Activated T-helper 1 cell treated with anti-CD3 and anti-CD28 coated beads, Interleukin-12 subunit alpha, Interleukin-12 subunit beta, Interleukin-2, Interleukin-4 antibody, amounts not matched to agents 30 ng/mL and 10 ng/mL and 1 ng/mL, durations not matched to agents 14 hours and 24 hours and 36 hours (primary cell): ENCODE measurements at regions of chr18 and their contacts with region 1.

Region 1: GRCh38 chr18:23231340-23232021 is 96.2 kb downstream of the CABLES1 start:
- DNase-seq: peak; percentile 80
- H3K4me3 Mint-ChIP-seq: peak overlapping the region; percentile 72
- H3K27ac Mint-ChIP-seq: peak overlapping the region; percentile 89
- H3K4me1 Mint-ChIP-seq: peaks cover 64% of the 10 kb centered on the region
- H3K27me3 Mint-ChIP-seq: peaks cover 8% of the 10 kb centered on the region

Region 2: DNA sequence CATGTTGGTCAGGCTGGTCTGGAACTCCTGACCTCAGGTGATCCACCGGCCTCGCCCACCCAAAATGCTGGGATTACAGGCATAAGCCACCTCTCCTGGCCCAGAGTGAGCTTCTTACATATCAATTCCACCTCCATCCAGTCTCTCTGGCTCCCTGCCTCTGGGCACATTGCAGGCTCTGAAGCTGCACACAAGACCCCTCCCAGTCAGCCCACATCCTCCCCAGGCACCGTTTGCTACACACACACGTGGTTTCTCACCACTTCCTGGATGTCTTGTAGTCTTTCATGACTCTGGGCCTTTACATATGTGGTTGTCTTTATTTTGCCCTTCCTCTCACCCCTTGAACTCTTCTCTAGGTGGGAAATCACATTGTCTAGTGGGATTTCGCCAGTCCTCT is 160.2 kb before region 1 on chr18:
- intact Hi-C with region 1: loop called (anchors 5 kb)
- DNase-seq: peak; percentile 86
- H3K4me3 Mint-ChIP-seq: peak overlapping the region; percentile 63
- H3K27ac Mint-ChIP-seq: peak overlapping the region; percentile 97
- H3K4me1 Mint-ChIP-seq: peaks cover 60% of the 10 kb centered on the region
- H3K27me3 Mint-ChIP-seq: peaks cover 2% of the 10 kb centered on the region

Region 3: GRCh38 chr18:23283916-23284430 is 52.5 kb after region 1 on chr18:
- intact Hi-C with region 1: no loop called
- DNase-seq: no peak
- H3K4me3 Mint-ChIP-seq: no peak overlapping the region
- H3K27ac Mint-ChIP-seq: no peak overlapping the region
- H3K4me1 Mint-ChIP-seq: peaks cover 17% of the 10 kb centered on the region
- H3K27me3 Mint-ChIP-seq: no peaks in the 10 kb centered on the region

Region 4: GRCh38 chr18:23356915-23357601 is 125.6 kb after region 1 on chr18:
- intact Hi-C with region 1: loop called (anchors 1 kb)
- DNase-seq: no peak
- H3K4me3 Mint-ChIP-seq: no peak overlapping the region
- H3K27ac Mint-ChIP-seq: no peak overlapping the region
- H3K4me1 Mint-ChIP-seq: peaks cover 21% of the 10 kb centered on the region
- H3K27me3 Mint-ChIP-seq: no peaks in the 10 kb centered on the region

Region 5: GRCh38 chr18:23437357-23438045 is 206.0 kb after region 1 on chr18:
- intact Hi-C with region 1: loop called (anchors 1 kb)
- DNase-seq: peak; percentile 74
- H3K4me3 Mint-ChIP-seq: peak overlapping the region; percentile 86
- H3K27ac Mint-ChIP-seq: peak overlapping the region; percentile 44
- H3K4me1 Mint-ChIP-seq: peaks cover 22% of the 10 kb centered on the region
- H3K27me3 Mint-ChIP-seq: peaks cover 2% of the 10 kb centered on the region

Region 6: DNA sequence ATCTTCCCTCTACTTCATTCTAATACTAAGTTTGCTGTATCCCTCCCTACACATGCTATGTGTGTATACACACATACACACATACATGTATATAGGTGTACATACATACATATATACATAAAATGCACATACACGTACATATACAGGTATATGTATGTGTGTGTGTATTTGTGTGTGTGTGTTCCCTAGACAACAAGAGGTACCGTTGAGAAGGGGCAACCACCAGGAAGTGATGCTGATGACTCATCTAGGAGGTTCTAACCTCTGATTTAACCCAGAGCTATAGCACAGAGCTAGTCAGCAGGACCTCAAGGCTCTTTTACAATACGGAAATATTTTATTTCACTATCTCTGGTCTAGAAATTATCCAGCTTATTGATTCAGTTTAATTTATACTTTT is 596.9 kb after region 1 on chr18:
- intact Hi-C with region 1: loop called (anchors 10 kb)
- DNase-seq: peak; percentile 49
- H3K4me3 Mint-ChIP-seq: no peak overlapping the region
- H3K27ac Mint-ChIP-seq: peak overlapping the region; percentile 89
- H3K4me1 Mint-ChIP-seq: peaks cover 52% of the 10 kb centered on the region
- H3K27me3 Mint-ChIP-seq: peaks cover 4% of the 10 kb centered on the region

Region 7: GRCh38 chr18:23938043-23938756 is 706.7 kb after region 1 on chr18:
- intact Hi-C with region 1: no loop called
- DNase-seq: peak; percentile 8
- H3K4me3 Mint-ChIP-seq: peak overlapping the region; percentile 17
- H3K27ac Mint-ChIP-seq: peak overlapping the region; percentile 61
- H3K4me1 Mint-ChIP-seq: peaks cover 53% of the 10 kb centered on the region
- H3K27me3 Mint-ChIP-seq: peaks cover 31% of the 10 kb centered on the region